Posterior vena cava (tissue), 2 donors: ENCODE measurements at regions of chr11 and their contacts with region 1.

Region 1: GRCh38 chr11:46249938-46250744 is 27.3 kb upstream of the CREB3L1 start:
- DNase-seq: no peak

Region 2: DNA sequence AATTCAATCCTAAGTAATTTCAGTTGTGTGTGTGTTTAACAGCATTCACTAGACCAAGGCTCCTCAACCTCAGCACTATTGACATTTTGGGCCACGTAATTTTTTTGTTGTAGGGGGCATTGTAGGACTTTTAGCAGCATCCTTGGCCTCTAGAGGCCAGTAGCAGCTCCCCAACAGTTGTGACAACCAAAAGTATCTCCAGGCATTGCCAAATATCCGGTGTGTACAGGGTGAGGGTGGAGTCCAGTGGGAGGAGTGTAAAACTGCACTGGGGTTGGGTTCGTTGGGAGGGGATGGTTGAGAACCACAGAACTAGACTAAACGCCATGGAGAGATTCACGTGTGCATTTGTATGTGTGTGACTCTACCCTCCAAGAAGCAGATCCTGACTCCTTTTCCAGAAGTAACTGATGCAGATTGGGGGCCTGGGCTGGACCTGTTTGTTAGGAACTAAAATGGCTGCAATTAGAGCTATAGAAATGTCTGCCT is 122.9 kb before region 1 on chr11:
- intact Hi-C with region 1: no loop called
- DNase-seq: no peak

Region 3: DNA sequence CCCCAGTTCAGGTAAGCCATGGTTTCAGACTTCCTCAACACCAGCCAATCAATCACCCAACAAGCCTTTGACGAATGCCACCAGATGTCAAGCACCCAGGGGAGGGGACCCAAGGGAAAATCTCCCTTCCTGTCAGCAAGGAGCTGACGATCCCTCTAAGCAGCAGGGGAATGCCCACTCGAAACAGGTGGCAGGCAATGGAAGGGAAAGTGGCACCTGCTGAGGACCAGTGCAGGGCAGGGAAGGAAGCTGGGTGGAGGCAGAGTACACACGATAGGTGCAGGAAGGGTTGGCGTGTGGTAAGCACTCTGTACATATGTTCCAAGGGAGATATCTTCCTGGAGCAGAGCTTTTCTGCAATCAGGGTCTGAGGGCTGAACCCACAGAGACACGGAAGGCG is 15.6 kb after region 1 on chr11:
- intact Hi-C with region 1: loop called in 1 of 2 experiments (anchors 2 kb)
- DNase-seq: no peak